ENCODE measurements at regions of chr16 and their contacts with region 1.

Region 1: GRCh38 chr16:58661199-58661830 is 23.3 kb downstream of the SLC38A7 start:
- DNase-seq: peak; percentile 32
- ATAC-seq: peak; percentile 89
- H3K4me3 Mint-ChIP-seq: no peak overlapping the region
- H3K27ac Mint-ChIP-seq: no peak overlapping the region
- H3K4me1 Mint-ChIP-seq: no peaks in the 10 kb centered on the region
- H3K27me3 Mint-ChIP-seq: peaks cover 2% of the 10 kb centered on the region
- CTCF ChIP-seq: no peak

Region 2: GRCh38 chr16:58499615-58500351 is 161.5 kb before region 1 on chr16 and contains the start of gene NDRG4:
- CTCF ChIA-PET with region 1: no interaction called
- POLR2A ChIA-PET with region 1: no interaction called
- intact Hi-C with region 1: loop called (anchors 10 kb)
- DNase-seq: peak; percentile 32
- ATAC-seq: peak; percentile 38
- H3K4me3 Mint-ChIP-seq: peak within 1 kb of the TSS; percentile 67
- H3K27ac Mint-ChIP-seq: no peak within 1 kb of the TSS
- H3K4me1 Mint-ChIP-seq: peaks cover 13% of the 10 kb centered on the region
- H3K27me3 Mint-ChIP-seq: peaks cover 32% of the 10 kb centered on the region
- CTCF ChIP-seq: no peak
- total RNA-seq, gene NDRG4: 1.3 to 1.6 TPM

Region 3: GRCh38 chr16:58692450-58692849 is 31.1 kb after region 1 on chr16:
- CTCF ChIA-PET with region 1: no interaction called
- POLR2A ChIA-PET with region 1: no interaction called
- intact Hi-C with region 1: no loop called
- DNase-seq: no peak
- ATAC-seq: no peak
- H3K4me3 Mint-ChIP-seq: no peak overlapping the region
- H3K27ac Mint-ChIP-seq: no peak overlapping the region
- H3K4me1 Mint-ChIP-seq: no peaks in the 10 kb centered on the region
- H3K27me3 Mint-ChIP-seq: no peaks in the 10 kb centered on the region
- CTCF ChIP-seq: no peak